CD4-positive, alpha-beta T cell (primary cell): ENCODE measurements at regions of chr19 and their contacts with region 1.

Region 1: GRCh38 chr19:8389891-8390616 is at the start of gene RAB11B:
- DNase-seq: peak; percentile 93 to 100 (median 97)
- ATAC-seq: peak; percentile 89
- H3K4me3 ChIP-seq: peak within 1 kb of the TSS; percentile 82
- H3K4me3 Mint-ChIP-seq: peak within 1 kb of the TSS; percentile 95
- H3K27ac ChIP-seq: peak within 1 kb of the TSS; percentile 91 to 92
- H3K27ac Mint-ChIP-seq: peak within 1 kb of the TSS; percentile 86
- H3K4me1 ChIP-seq: peaks cover 27% of the 10 kb centered on the region
- H3K4me1 Mint-ChIP-seq: peaks cover 28% of the 10 kb centered on the region
- H3K27me3 ChIP-seq: no peaks in the 10 kb centered on the region
- H3K27me3 Mint-ChIP-seq: no peaks in the 10 kb centered on the region
- CTCF ChIP-seq: no peak
- total RNA-seq, gene RAB11B: 66.8 to 71.5 TPM

Region 2: DNA sequence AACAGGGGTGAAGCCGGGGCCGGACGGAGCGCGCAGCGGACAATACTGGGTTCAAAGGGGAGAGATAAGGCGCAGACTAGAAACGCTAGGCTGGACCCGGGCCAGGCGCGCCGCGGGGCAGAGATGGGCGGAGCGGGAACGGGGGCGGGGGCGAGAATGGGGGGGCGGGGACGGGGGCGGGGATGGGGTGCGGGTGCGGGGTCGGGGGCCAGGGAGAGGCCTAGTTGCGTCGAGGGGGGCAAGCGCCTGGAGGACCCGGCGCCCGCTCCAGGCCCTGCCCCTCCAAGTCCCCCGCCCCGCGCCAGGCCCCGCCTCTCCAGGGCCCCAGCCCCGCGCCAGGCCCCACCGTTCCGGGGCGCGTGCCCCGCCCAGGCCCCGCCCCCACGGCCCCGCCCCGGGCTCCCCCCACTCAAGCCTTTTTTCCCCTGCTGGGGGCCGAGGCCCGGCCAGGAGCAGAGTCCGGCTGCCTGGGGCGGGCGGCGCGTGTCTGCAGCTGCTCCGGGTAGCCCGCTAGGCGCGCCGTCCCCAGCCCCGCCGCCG is 181.1 kb before region 1 on chr19 and contains the start of gene CERS4:
- CTCF ChIA-PET with region 1: no interaction called
- POLR2A ChIA-PET with region 1: no interaction called
- intact Hi-C with region 1: loop called in 1 of 2 experiments (anchors 5 kb)
- DNase-seq: peak; percentile 54 to 92 (median 73)
- ATAC-seq: peak; percentile 83
- H3K4me3 ChIP-seq: peak within 1 kb of the TSS; percentile 95
- H3K4me3 Mint-ChIP-seq: peak within 1 kb of the TSS; percentile 93
- H3K27ac ChIP-seq: peak within 1 kb of the TSS; percentile 18 to 81
- H3K27ac Mint-ChIP-seq: peak within 1 kb of the TSS; percentile 90
- H3K4me1 ChIP-seq: peaks cover 39% of the 10 kb centered on the region
- H3K4me1 Mint-ChIP-seq: peaks cover 21% of the 10 kb centered on the region
- H3K27me3 ChIP-seq: no peaks in the 10 kb centered on the region
- H3K27me3 Mint-ChIP-seq: no peaks in the 10 kb centered on the region
- CTCF ChIP-seq: no peak
- total RNA-seq, gene CERS4: 8.7 to 12.3 TPM

Region 3: DNA sequence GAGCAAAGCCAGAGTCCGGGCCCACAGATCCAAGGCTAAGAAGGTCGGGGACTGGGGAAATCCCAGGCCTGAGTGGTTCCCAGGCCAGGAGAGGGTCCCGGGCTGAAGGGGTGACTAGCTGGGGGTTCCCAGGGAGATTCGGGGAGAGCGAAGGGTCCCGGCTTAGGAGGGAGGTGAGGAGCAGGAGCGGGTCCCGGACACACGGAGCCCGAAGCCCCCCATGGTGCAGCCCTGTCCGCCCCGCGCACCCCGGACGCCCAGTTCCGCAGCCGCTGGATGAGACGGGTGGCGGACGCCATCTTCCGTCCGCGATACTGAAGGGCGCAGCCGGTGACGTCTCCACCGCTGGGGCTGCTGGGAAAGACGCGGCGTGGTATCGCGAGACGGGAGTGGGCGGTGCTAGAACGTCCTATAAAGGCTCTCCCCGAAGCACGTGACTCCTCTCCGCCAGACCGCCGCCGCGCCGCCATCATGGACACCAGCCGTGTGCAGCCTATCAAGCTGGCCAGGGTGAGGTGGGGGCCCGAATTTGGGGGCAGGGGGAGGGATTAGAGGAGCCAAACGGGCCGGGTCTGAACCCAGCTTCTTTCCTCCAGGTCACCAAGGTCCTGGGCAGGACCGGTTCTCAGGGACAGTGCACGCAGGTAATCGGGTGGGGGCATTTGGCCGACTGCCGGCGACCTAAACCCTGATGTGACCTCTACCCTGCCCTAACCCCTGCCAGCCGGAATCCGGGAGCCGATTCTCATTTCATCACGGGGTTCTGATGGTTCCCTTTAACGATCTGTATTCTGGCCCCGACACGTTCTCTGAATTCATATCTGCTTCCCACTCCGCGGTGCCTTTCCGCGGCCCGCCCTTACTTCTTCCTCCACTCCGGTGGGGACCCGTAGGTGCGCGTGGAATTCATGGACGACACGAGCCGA is 68.7 kb before region 1 on chr19 and contains the starts of genes NDUFA7 and RPS28:
- CTCF ChIA-PET with region 1: no interaction called
- POLR2A ChIA-PET with region 1: interaction called, 5 read pairs
- intact Hi-C with region 1: loop called (anchors 2 kb)
- DNase-seq: peak; percentile 95 to 99 (median 98)
- ATAC-seq: peak; percentile 94
- H3K4me3 ChIP-seq: peak within 1 kb of the TSS; percentile 100
- H3K4me3 Mint-ChIP-seq: peak within 1 kb of the TSS; percentile 96
- H3K27ac ChIP-seq: peak within 1 kb of the TSS; percentile 85 to 96
- H3K27ac Mint-ChIP-seq: peak within 1 kb of the TSS; percentile 97
- H3K4me1 ChIP-seq: peaks cover 33% of the 10 kb centered on the region
- H3K4me1 Mint-ChIP-seq: peaks cover 41% of the 10 kb centered on the region
- H3K27me3 ChIP-seq: no peaks in the 10 kb centered on the region
- H3K27me3 Mint-ChIP-seq: no peaks in the 10 kb centered on the region
- CTCF ChIP-seq: peak; percentile 16
- total RNA-seq, gene NDUFA7: 42.0 to 42.7 TPM
- total RNA-seq, gene RPS28: 3,333 to 3,342 TPM

Region 4: GRCh38 chr19:8412783-8413628 is 23.0 kb after region 1 on chr19 and contains the start of gene MARCHF2:
- CTCF ChIA-PET with region 1: interaction called, 4 read pairs
- POLR2A ChIA-PET with region 1: interaction called, 26 read pairs
- intact Hi-C with region 1: loop called (anchors 1 kb)
- DNase-seq: peak; percentile 91 to 99 (median 96)
- ATAC-seq: peak; percentile 99
- H3K4me3 ChIP-seq: peak within 1 kb of the TSS; percentile 62
- H3K4me3 Mint-ChIP-seq: peak within 1 kb of the TSS; percentile 81
- H3K27ac ChIP-seq: no peak within 1 kb of the TSS
- H3K27ac Mint-ChIP-seq: no peak within 1 kb of the TSS
- H3K4me1 ChIP-seq: peaks cover 15% of the 10 kb centered on the region
- H3K4me1 Mint-ChIP-seq: peaks cover 13% of the 10 kb centered on the region
- H3K27me3 ChIP-seq: no peaks in the 10 kb centered on the region
- H3K27me3 Mint-ChIP-seq: no peaks in the 10 kb centered on the region
- CTCF ChIP-seq: peak; percentile 75
- total RNA-seq, gene MARCHF2: 20.0 to 22.2 TPM

Region 5: DNA sequence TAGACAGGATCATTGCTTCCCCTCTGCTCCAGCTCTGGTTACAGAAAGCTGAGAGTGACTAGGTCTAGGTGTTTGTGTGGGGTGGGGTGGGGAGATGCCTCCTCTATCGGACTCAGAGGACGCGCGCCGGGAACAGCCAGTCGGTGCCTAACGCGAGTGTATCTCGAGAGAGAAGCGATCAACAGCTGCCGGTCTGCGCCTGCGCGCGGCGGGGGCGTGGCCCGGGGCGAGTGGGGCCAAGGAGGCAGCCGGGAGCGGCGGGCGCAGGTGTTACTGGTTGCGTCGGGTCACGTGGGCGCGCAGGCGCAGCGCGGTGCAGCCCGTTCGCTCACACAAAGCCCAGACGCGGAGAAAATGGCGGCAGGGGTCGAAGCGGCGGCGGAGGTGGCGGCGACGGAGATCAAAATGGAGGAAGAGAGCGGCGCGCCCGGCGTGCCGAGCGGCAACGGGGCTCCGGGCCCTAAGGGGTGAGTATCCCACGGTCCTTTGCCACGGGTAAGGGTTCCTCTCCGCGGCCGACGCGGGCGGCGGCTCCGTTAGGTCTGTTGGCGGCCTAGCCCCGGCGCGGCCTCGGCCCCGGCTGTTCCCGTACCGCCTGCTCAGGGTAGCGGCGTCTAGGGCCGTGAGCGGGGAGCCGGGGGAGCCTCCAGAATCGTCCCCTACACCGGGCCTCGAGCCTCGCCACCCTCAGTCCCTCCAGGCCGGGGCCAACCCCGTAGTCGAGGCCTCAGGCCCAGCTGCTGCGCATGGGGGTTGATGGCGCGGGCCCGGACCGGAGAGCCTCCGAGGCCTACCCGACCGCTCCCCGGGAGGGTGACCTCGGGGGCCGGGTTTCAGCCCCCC is 54.8 kb after region 1 on chr19 and contains the start of gene HNRNPM:
- CTCF ChIA-PET with region 1: no interaction called
- POLR2A ChIA-PET with region 1: interaction called, 5 read pairs
- intact Hi-C with region 1: loop called in 1 of 2 experiments (anchors 2 kb)
- DNase-seq: peak; percentile 99 to 100 (median 100)
- ATAC-seq: peak; percentile 94
- H3K4me3 ChIP-seq: peak within 1 kb of the TSS; percentile 97
- H3K4me3 Mint-ChIP-seq: peak within 1 kb of the TSS; percentile 100
- H3K27ac ChIP-seq: peak within 1 kb of the TSS; percentile 86 to 93
- H3K27ac Mint-ChIP-seq: peak within 1 kb of the TSS; percentile 98
- H3K4me1 ChIP-seq: peaks cover 52% of the 10 kb centered on the region
- H3K4me1 Mint-ChIP-seq: peaks cover 47% of the 10 kb centered on the region
- H3K27me3 ChIP-seq: no peaks in the 10 kb centered on the region
- H3K27me3 Mint-ChIP-seq: no peaks in the 10 kb centered on the region
- CTCF ChIP-seq: no peak
- total RNA-seq, gene HNRNPM: 269 to 272 TPM

Region 6: GRCh38 chr19:8832132-8833021 is 442.3 kb after region 1 on chr19 and contains the starts of genes MBD3L1 and ZNF558:
- CTCF ChIA-PET with region 1: no interaction called
- POLR2A ChIA-PET with region 1: no interaction called
- intact Hi-C with region 1: loop called in 1 of 2 experiments (anchors 5 kb)
- DNase-seq: peak; percentile 95 to 100 (median 99)
- ATAC-seq: peak; percentile 88
- H3K4me3 ChIP-seq: peak within 1 kb of the TSS; percentile 90
- H3K4me3 Mint-ChIP-seq: peak within 1 kb of the TSS; percentile 97
- H3K27ac ChIP-seq: peak within 1 kb of the TSS; percentile 89 to 92
- H3K27ac Mint-ChIP-seq: peak within 1 kb of the TSS; percentile 95
- H3K4me1 ChIP-seq: peaks cover 15% of the 10 kb centered on the region
- H3K4me1 Mint-ChIP-seq: peaks cover 31% of the 10 kb centered on the region
- H3K27me3 ChIP-seq: no peaks in the 10 kb centered on the region
- H3K27me3 Mint-ChIP-seq: no peaks in the 10 kb centered on the region
- CTCF ChIP-seq: peak; percentile 48
- total RNA-seq, gene MBD3L1: not detected
- total RNA-seq, gene ZNF558: 22.2 to 23.3 TPM